WTC11 (cell line): ENCODE measurements at regions of chr14 and their contacts with region 1.

Region 1: DNA sequence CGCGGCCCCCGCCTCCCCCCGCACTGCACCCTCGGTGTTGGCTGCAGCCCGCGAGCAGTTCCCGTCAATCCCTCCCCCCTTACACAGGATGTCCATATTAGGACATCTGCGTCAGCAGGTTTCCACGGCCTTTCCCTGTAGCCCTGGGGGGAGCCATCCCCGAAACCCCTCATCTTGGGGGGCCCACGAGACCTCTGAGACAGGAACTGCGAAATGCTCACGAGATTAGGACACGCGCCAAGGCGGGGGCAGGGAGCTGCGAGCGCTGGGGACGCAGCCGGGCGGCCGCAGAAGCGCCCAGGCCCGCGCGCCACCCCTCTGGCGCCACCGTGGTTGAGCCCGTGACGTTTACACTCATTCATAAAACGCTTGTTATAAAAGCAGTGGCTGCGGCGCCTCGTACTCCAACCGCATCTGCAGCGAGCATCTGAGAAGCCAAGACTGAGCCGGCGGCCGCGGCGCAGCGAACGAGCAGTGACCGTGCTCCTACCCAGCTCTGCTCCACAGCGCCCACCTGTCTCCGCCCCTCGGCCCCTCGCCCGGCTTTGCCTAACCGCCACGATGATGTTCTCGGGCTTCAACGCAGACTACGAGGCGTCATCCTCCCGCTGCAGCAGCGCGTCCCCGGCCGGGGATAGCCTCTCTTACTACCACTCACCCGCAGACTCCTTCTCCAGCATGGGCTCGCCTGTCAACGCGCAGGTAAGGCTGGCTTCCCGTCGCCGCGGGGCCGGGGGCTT is at the start of gene FOS:
- DNase-seq: peak; percentile 86
- ATAC-seq: peak; percentile 72
- H3K4me3 Mint-ChIP-seq: peak within 1 kb of the TSS; percentile 88
- H3K27ac Mint-ChIP-seq: peak within 1 kb of the TSS; percentile 98
- H3K4me1 Mint-ChIP-seq: peaks cover 35% of the 10 kb centered on the region
- H3K27me3 Mint-ChIP-seq: peaks cover 35% of the 10 kb centered on the region
- CTCF ChIP-seq: no peak
- total RNA-seq, gene FOS: 23.9 to 57.4 TPM (median 50.8 TPM) in 3 replicates

Region 2: DNA sequence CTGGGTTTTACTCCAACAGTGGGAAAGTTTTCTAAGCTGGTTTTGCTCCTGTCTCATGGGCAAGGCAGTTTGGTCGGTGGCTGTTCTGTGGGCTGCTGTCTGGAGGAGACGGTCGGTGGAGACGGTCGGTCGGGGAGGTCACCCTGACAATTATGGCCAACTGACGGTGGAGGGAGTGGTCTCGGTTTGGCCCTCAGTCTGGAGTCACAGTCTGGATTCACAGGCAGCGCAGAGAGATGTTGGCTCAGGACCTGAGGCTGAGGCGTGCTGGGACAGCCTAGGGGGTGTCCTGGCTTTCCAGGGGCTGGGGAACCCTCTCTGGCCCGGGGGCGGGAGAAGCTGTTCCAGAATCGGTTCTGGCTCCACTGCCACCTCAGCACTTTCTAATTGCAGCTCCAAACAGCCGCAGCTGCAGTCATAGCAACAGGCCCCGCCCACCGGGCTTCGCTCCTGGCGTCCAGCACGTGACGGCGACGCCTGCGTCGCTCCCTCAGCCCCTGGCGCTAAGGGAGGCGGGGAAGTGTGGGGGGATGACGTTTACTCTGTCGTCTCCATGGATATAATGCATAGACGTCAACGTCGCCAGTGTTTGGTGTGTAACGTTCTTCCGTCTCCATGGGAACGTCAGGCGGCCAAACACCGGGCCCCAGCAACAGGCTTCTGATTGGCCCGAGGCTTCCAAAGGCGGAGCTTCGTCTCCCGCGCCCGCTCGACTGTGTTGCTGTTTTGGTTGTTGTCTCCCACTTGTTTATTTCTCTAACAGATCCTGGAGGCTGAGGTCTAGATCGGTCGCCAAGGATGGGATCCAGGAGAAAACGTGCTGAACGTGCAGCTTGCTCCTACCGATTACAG is 19.8 kb before region 1 on chr14:
- CTCF ChIA-PET with region 1: interaction called, 7 read pairs
- POLR2A ChIA-PET with region 1: interaction called, 34 read pairs
- DNase-seq: peak; percentile 100
- ATAC-seq: peak; percentile 93
- H3K4me3 Mint-ChIP-seq: peak overlapping the region; percentile 94
- H3K27ac Mint-ChIP-seq: peak overlapping the region; percentile 100
- H3K4me1 Mint-ChIP-seq: peaks cover 34% of the 10 kb centered on the region
- H3K27me3 Mint-ChIP-seq: peaks cover 3% of the 10 kb centered on the region; the same call in 1 of the 2 replicates
- CTCF ChIP-seq: no peak

Region 3: GRCh38 chr14:75293920-75294642 is 15.5 kb after region 1 on chr14:
- CTCF ChIA-PET with region 1: interaction called, 14 read pairs
- POLR2A ChIA-PET with region 1: interaction called, 30 read pairs
- DNase-seq: peak; percentile 95
- ATAC-seq: peak; percentile 86
- H3K4me3 Mint-ChIP-seq: peak overlapping the region; percentile 83
- H3K27ac Mint-ChIP-seq: peak overlapping the region; percentile 95
- H3K4me1 Mint-ChIP-seq: peaks cover 12% of the 10 kb centered on the region
- H3K27me3 Mint-ChIP-seq: no peaks in the 10 kb centered on the region; the same call in 1 of the 2 replicates
- CTCF ChIP-seq: no peak